Activated CD4-positive, alpha-beta memory T cell treated with anti-CD3 and anti-CD28 coated beads, Interleukin-2, amount 10 ng/mL, durations not matched to agents 7 days and 5 days (primary cell): ENCODE measurements at regions of chr13 and their contacts with region 1.

Region 1: DNA sequence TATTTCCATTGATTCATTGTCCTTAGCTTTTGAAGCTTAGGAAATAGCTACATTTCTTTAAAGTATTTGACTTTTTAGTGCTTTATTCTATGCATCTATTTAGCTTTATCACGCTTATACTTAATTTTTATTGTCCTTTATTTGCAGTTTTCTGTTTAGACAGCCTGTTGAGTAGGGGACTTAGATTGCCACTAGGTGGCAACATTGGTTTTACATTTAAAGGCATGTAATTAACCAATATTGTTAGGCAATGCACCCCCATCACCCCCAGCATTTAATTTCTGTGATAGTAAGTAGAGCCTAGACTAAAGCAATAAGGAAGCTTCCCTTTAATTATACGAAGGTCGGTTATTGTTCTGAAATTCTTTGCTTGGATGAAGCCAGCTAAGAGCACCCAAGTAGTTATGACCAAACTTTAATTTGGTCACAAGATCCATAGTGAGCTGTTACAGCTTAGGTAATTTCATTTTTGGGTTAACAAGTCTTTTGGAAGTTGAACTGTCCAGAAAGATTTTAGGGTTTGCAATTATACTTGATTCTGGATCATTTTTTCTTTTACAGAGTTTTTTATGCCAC is 36.5 kb downstream of the B3GLCT start:
- DNase-seq: no peak
- H3K4me3 Mint-ChIP-seq: no peak overlapping the region
- H3K27ac Mint-ChIP-seq: no peak overlapping the region
- H3K4me1 Mint-ChIP-seq: no peaks in the 10 kb centered on the region
- H3K27me3 Mint-ChIP-seq: no peaks in the 10 kb centered on the region

Region 2: DNA sequence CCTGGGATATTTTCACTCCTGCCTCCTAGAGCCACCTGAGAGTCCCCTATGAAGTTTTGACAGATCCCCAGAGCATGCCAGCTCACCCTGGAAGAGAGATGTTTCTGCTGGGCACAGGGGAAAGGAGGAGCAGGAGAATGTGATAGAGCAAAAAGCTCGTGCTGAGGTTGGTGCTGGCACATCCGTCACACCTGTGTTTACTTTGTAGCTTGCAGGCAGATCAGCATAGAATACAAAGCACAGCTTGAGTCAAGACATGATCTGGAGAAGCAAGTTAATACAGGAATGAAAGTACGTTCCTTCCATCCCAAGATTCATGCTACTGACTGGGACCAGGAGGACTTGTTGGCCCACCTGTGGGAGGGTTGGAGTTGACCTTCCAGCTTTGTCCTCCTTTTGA is 120.7 kb before region 1 on chr13:
- CTCF ChIA-PET with region 1: no interaction called
- POLR2A ChIA-PET with region 1: no interaction called
- DNase-seq: no peak
- H3K4me3 Mint-ChIP-seq: no peak overlapping the region
- H3K27ac Mint-ChIP-seq: no peak overlapping the region
- H3K4me1 Mint-ChIP-seq: peaks cover 13% of the 10 kb centered on the region
- H3K27me3 Mint-ChIP-seq: peaks cover 56% of the 10 kb centered on the region

Region 3: DNA sequence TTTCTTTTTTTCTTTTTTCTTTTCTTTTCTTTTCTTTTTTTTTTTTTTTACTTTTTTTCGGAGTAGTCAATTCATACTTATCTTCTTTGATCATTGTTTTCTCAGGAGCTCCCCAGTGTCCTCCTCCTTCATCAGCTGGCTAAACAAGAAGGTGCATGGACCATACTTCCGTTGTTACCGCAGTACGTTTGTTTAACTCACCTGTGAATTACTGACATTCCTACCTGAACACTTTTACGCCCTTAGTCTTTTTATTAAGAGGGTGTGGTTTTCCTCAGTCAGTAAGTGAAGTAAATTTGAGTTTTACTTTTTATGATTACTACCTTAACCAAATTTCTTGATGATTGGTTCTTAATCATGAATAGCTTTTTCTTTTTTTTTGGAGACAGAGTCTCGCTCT is 10.6 kb after region 1 on chr13:
- CTCF ChIA-PET with region 1: interaction called, 25 read pairs
- POLR2A ChIA-PET with region 1: no interaction called
- DNase-seq: no peak
- H3K4me3 Mint-ChIP-seq: no peak overlapping the region
- H3K27ac Mint-ChIP-seq: no peak overlapping the region
- H3K4me1 Mint-ChIP-seq: no peaks in the 10 kb centered on the region
- H3K27me3 Mint-ChIP-seq: no peaks in the 10 kb centered on the region

Region 4: GRCh38 chr13:31357581-31357980 is 121.3 kb after region 1 on chr13:
- CTCF ChIA-PET with region 1: no interaction called
- POLR2A ChIA-PET with region 1: no interaction called
- DNase-seq: no peak
- H3K4me3 Mint-ChIP-seq: no peak overlapping the region
- H3K27ac Mint-ChIP-seq: no peak overlapping the region
- H3K4me1 Mint-ChIP-seq: no peaks in the 10 kb centered on the region
- H3K27me3 Mint-ChIP-seq: no peaks in the 10 kb centered on the region

Region 5: GRCh38 chr13:31424117-31424729 is 187.9 kb after region 1 on chr13:
- CTCF ChIA-PET with region 1: interaction called, 53 read pairs
- POLR2A ChIA-PET with region 1: no interaction called
- DNase-seq: peak; percentile 67
- H3K4me3 Mint-ChIP-seq: no peak overlapping the region
- H3K27ac Mint-ChIP-seq: no peak overlapping the region
- H3K4me1 Mint-ChIP-seq: no peaks in the 10 kb centered on the region
- H3K27me3 Mint-ChIP-seq: peaks cover 8% of the 10 kb centered on the region